SK-N-SH (cell line): ENCODE measurements at regions of chr11 and their contacts with region 1.

Region 1: DNA sequence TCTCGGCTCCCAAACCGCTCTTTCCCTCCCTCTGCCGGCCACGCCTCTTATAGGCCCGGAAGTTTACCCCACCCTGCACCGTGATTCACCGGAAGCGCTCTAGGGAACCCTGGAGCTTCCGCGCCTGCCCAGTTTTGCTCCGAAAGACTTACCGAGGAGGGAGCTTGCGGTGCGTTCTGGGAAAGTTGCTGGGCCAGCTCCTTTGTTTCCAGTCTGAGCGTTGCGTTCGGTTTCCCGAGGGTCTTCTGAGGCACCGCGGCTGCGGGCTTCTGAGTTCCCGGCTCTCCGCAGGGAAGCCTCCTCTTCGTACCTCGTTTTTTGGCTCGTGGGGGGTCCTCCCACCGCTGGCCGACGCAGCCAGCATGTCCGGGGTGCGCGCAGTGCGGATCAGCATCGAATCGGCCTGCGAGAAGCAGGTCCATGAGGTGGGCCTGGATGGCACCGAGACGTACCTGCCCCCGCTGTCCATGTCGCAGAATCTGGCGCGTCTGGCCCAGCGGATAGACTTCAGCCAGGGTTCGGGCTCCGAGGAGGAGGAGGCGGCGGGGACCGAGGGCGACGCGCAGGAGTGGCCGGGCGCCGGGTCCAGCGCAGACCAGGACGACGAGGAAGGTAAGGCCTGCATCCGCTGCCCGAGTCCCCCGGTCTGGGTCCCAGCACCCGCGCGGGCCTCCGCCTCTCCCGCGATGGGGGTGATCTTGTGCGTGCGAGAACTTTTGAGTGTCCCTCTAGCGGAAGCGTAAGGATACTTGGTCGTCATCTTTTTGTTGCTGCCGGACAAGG is at the start of gene MED17:
- DNase-seq: peak; percentile 95
- H3K4me3 ChIP-seq: peak within 1 kb of the TSS; percentile 79 to 89
- H3K27ac ChIP-seq: peak within 1 kb of the TSS; percentile 94 to 96
- H3K4me1 ChIP-seq: peaks cover 2 to 18% of the 10 kb centered on the region in 2 experiments; a peak in 3 of 4 replicates
- H3K27me3 ChIP-seq: no peaks in the 10 kb centered on the region
- CTCF ChIP-seq: peak; percentile 53
- EP300 ChIP-seq: no peak
- RAD21 ChIP-seq: no peak
- polyA plus RNA-seq, gene MED17: 19.3 and 19.9 TPM in 2 replicates

Region 2: DNA sequence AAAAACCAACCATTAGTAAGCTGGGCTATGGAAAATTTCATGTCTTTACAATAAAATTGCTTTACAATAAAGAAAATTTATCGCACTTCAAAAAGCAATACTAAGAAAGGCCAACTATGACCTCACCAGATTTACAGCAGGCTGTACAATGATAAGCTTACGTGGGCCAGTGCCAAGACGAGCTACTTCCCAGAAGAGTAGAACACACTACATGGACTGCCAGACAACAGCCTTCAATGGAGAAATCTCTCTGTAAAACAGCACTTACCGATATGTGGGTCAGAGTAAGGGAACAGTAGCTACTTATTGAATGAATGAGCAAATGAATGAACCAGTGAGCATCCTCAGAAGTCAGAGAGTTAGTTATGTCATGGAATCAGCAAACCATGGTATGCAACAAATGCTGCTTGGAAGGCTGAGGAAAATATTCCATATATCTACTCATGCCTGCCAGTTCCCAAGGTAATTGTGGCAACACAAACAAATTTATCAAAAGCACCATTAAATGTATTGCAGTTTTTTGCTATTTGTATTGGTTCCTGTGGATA is 660.9 kb before region 1 on chr11:
- CTCF ChIA-PET with region 1: no interaction called
- POLR2A ChIA-PET with region 1: no interaction called
- DNase-seq: no peak
- H3K4me3 ChIP-seq: no peak overlapping the region
- H3K27ac ChIP-seq: no peak overlapping the region
- H3K4me1 ChIP-seq: no peaks in the 10 kb centered on the region
- H3K27me3 ChIP-seq: no peaks in the 10 kb centered on the region
- CTCF ChIP-seq: no peak
- EP300 ChIP-seq: no peak
- RAD21 ChIP-seq: no peak

Region 3: DNA sequence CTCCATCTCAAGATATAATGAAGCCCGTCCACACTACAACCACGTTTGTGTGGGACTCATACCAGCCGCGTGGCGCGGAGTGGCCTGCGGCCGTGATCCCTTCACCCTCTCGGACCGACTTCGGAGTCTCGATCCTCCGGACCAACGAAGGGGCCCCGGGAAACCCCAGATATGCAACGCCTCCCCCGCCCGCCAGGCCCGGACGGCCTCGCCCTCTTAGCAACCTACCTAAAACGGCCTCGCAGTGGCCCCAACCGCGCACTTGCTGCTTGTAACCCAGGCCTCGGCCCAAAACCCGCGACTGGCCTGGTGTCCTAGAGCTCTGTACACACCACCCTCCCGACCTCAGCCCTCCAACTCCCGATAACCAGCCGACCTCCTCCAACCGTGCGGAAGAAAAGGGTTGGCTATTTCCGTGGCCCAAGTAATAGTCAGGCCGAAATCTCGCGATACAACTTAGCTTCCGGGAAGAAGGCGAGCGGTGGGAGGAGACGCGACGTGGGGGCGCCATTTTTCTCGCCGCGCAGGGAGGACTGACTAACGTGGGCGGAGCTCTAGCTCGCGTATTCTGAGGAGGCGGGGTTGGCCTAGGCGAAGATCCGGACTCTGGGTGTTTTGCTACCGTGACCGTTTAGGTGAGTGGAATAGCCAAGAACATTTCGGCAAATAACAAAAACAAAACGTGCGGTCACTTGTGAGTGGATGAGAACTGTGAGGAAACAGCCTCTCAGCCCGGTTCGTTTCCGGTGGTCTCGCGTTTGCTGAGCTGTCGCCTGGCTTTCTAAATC is 43.1 kb before region 1 on chr11 and contains the starts of genes C11orf54 and TAF1D:
- CTCF ChIA-PET with region 1: interaction called, 5 read pairs
- POLR2A ChIA-PET with region 1: interaction called, 72 read pairs
- DNase-seq: peak; percentile 94
- H3K4me3 ChIP-seq: peak within 1 kb of the TSS; percentile 94 to 95
- H3K27ac ChIP-seq: peak within 1 kb of the TSS; percentile 93 to 96
- H3K4me1 ChIP-seq: peaks cover 8 to 19% of the 10 kb centered on the region in 2 experiments; a peak in 3 of 4 replicates
- H3K27me3 ChIP-seq: no peaks in the 10 kb centered on the region
- CTCF ChIP-seq: no peak; the same call in 1 of the 2 replicates
- EP300 ChIP-seq: no peak
- RAD21 ChIP-seq: no peak
- polyA plus RNA-seq, gene C11orf54: 7.7 and 12.4 TPM in 2 replicates
- polyA plus RNA-seq, gene TAF1D: 56.7 and 76.9 TPM in 2 replicates

Region 4: DNA sequence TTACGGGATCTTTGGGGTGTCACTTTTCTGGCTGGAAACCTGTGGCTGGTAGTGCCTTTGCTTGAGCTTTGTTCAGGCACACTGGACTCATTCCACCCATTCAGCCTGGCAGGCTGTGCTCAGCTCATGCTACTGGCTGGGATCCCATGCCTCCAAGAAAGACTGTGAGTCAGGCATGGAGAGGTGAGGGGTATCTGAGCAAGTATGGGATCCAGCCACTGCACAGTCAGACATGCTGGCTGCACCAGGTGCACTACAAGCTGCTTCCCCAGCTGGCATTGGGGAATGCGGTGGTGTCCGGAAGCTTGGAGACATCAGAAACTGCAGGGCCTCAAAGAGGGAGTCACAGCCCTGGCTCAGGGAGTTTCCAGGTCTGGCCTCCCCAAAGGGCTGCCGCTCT is 12.2 kb before region 1 on chr11:
- CTCF ChIA-PET with region 1: interaction called, 5 read pairs
- POLR2A ChIA-PET with region 1: interaction called, 10 read pairs
- DNase-seq: no peak
- H3K4me3 ChIP-seq: no peak overlapping the region
- H3K27ac ChIP-seq: no peak overlapping the region
- H3K4me1 ChIP-seq: no peaks in the 10 kb centered on the region
- H3K27me3 ChIP-seq: no peaks in the 10 kb centered on the region
- CTCF ChIP-seq: no peak
- EP300 ChIP-seq: no peak
- RAD21 ChIP-seq: no peak

Region 5: GRCh38 chr11:93822359-93822758 is 38.0 kb after region 1 on chr11:
- CTCF ChIA-PET with region 1: no interaction called
- POLR2A ChIA-PET with region 1: no interaction called
- DNase-seq: no peak
- H3K4me3 ChIP-seq: no peak overlapping the region
- H3K27ac ChIP-seq: no peak overlapping the region
- H3K4me1 ChIP-seq: peaks cover 0 to 15% of the 10 kb centered on the region in 2 experiments; a peak in 1 of 4 replicates
- H3K27me3 ChIP-seq: no peaks in the 10 kb centered on the region
- CTCF ChIP-seq: no peak
- EP300 ChIP-seq: no peak
- RAD21 ChIP-seq: no peak